RWPE1 (cell line): ENCODE measurements at regions of chr6 and their contacts with region 1.

Region 1: DNA sequence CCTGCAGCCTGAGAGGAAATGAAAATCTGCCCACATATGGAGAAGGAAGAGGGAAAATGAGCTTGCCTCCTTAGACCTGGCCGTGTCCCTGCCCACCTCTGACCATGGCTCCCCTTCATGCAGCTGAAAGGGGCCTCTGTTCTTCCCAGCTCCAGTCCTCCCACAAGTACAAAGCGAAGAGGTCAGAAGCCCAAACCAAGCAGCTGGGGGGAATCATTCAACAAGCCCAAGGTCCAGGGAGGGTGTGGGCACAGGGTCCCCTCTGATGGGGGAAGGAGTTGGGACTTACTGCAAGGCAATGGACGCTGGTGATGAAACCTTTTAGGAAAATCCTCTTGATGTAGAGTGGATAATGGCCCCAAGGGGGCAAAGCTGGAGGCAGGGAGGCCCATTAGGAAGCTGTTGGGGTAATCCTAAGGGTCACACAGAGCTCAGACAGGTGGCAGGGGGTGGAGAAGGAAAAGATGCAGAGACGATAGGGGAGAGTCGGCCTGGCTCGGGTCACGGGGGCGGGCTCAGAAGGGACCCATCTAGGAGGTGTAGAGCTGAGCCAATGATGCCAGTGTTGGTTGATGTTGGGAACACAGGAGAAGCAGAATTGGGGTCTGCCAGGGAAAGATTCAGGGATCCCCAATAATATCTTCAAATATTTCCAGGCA is 16.1 kb upstream of the GRM4 start:
- DNase-seq: no peak
- H3K27ac ChIP-seq: no peak overlapping the region
- CTCF ChIP-seq: no peak

Region 2: DNA sequence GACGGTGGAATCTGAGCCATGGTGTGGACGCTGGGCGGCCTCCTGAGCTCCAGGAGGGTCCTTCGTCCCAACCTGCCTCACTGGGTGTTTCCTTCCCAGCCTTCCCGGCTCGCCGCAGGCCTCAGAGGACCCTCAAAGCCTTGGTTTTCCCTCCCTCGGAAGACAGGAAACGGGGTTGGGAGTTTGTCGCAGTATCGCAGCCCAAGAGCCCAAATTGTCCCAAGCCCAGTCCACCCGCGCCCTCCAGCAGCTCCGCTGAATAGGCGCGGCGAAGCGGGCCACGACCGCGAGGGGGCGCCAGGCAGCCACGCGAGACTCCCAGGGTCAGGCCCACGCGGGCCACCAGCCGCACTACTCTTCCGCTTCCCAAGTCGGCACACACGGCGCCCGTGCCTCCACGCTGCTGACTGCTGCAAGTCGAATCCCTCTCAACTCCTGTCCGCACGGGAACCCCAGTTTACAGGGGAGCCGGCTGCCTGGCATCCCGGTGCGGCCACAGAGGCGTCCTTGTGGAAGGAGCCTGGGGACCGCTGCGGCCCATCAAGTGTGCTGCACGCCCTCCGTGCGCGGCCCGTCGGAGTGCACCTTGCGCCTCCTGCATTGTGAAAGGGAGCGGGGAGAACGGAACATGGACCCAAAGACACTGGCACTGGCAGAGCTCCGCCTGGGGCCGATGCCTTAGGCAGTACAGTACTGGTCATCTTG is 34.3 kb after region 1 on chr6:
- CTCF ChIA-PET with region 1: interaction called, 10 read pairs
- POLR2A ChIA-PET with region 1: no interaction called
- DNase-seq: peak; percentile 77
- H3K27ac ChIP-seq: no peak overlapping the region
- CTCF ChIP-seq: peak; percentile 94